A549 (cell line): ENCODE measurements at regions of chr17 and their contacts with region 1.

Region 1: GRCh38 chr17:72136693-72137092 is 15.9 kb downstream of the SOX9 start:
- DNase-seq: peak; percentile 44 to 62
- ATAC-seq: peak in 1 of 2 experiments; percentile 69; a peak in 3 of 6 replicates
- H3K4me3 ChIP-seq: no peak overlapping the region
- H3K27ac ChIP-seq: peak overlapping the region; percentile 58 to 72
- H3K4me1 ChIP-seq: peaks cover 53% of the 10 kb centered on the region
- CTCF ChIP-seq: no peak
- EP300 ChIP-seq: no peak
- POLR2A ChIP-seq: no peak
- RAD21 ChIP-seq: peak in 1 of 2 experiments; percentile 26; a peak in 2 of 5 replicates

Region 2: DNA sequence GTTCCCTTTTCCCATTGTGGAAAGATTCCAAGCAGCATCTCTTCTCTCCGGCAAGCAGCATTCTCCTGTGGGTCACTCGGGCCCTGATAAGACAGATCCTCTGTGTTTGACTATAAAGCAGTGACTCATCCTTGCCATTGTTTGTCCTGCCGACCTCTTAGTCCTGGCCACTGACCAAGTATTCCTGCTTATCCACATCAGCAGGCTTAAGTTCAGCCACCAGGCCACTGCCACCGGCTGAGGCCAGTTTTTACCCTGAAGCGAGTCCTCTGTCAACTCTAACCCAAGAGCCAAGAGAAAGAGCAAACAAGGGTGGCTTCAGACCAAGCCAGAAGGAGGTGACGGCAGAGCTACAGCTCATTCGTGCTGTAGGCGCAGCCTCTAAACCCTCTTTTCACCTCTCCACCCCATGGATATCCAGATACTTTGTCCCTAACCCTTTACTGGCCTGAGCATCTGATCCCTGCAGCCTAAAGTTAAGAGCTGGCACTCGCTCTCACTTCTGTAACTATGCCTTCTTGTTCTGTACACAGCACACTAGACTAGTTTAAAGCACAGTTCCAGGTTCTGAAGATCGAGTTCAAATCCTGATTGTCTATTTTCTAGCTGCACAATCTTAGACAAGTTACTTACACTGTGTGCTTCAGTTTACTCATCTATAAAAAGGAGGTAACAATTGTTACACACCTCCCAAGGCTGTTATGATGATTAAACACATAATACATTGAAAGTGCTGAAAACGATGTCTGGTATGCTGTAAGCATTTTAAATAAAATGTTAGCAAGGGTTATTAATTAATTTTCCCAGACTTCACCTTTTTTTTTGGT is 15.1 kb after region 1 on chr17:
- CTCF ChIA-PET with region 1: interaction called, 16 read pairs
- POLR2A ChIA-PET with region 1: no interaction called
- DNase-seq: peak; percentile 98 to 99
- ATAC-seq: peak; percentile 95 to 96
- H3K4me3 ChIP-seq: peak overlapping the region; percentile 20; the same call in 2 of the 3 replicates
- H3K27ac ChIP-seq: peak overlapping the region; percentile 77 to 85
- H3K4me1 ChIP-seq: peaks cover 28% of the 10 kb centered on the region
- CTCF ChIP-seq: no peak
- EP300 ChIP-seq: peak; percentile 37 to 51; a peak in 2 of 5 replicates
- POLR2A ChIP-seq: no peak
- RAD21 ChIP-seq: peak; percentile 57 to 59; a peak in 4 of 5 replicates